ENCODE measurements at regions of chr12 and their contacts with region 1.

Region 1: GRCh38 chr12:49974231-49974675 is 1.5 kb downstream of the AQP6 start:
- DNase-seq: peak; percentile 57 to 88 (median 86)
- H3K4me3 ChIP-seq: peak overlapping the region in 36 of 59 donors; percentile 1 to 56 (median 24)
- H3K27ac ChIP-seq: peak overlapping the region in 50 of 59 donors; percentile 14 to 86 (median 70)
- H3K27me3 ChIP-seq: no peaks in the 10 kb centered on the region
- CTCF ChIP-seq: peak; percentile 22 to 89 (median 71)

Region 2: GRCh38 chr12:49422114-49422513 is 552.1 kb before region 1 on chr12:
- intact Hi-C with region 1: no loop called
- DNase-seq: no peak
- H3K4me3 ChIP-seq: no peak overlapping the region
- H3K27ac ChIP-seq: no peak overlapping the region
- H3K27me3 ChIP-seq: no peaks in the 10 kb centered on the region
- CTCF ChIP-seq: no peak

Region 3: DNA sequence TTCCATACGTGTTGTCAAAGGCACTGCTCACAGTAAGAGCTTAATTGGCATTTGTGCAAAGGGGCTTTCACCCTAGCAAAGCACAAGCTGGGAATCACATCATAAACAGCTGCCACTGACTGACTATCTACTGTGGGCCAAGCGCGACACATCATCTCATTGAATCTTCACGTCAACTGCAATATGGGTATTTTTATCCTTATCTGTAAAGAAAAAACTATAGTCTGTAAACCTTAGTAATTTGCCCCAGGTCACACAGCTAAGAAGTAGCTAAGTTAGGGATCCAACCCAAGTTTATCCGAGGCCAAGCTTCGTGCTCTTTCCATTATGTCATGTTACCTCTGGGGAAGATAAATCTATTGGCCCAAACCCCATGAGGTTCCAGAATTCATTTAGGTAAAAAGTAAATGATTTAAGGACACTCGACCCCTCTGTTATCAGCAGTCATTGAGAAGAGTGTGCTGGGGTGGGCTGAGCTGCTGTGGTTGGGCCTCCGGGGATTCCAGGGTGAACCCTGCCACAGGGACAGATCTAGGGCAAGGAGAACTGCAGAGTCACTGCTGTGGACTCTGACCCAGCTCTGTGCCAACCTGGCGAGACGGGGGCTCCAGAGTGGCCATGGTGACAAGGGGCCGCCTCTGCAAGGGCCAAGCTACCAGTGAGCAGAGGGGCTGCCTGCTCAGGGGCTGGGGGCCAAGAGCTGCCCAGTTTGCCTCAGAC is 173.7 kb before region 1 on chr12:
- intact Hi-C with region 1: no loop called
- DNase-seq: no peak
- H3K4me3 ChIP-seq: no peak overlapping the region
- H3K27ac ChIP-seq: no peak overlapping the region
- H3K27me3 ChIP-seq: no peaks in the 10 kb centered on the region
- CTCF ChIP-seq: no peak

Region 4: GRCh38 chr12:50024805-50025186 is 50.5 kb after region 1 on chr12:
- intact Hi-C with region 1: loop called (anchors 5 kb)
- DNase-seq: no peak
- H3K4me3 ChIP-seq: peak overlapping the region; percentile 55 to 95 (median 80)
- H3K27ac ChIP-seq: peak overlapping the region in 12 of 59 donors; percentile 24 to 92 (median 84)
- H3K27me3 ChIP-seq: no peaks in the 10 kb centered on the region
- CTCF ChIP-seq: no peak

Region 5: DNA sequence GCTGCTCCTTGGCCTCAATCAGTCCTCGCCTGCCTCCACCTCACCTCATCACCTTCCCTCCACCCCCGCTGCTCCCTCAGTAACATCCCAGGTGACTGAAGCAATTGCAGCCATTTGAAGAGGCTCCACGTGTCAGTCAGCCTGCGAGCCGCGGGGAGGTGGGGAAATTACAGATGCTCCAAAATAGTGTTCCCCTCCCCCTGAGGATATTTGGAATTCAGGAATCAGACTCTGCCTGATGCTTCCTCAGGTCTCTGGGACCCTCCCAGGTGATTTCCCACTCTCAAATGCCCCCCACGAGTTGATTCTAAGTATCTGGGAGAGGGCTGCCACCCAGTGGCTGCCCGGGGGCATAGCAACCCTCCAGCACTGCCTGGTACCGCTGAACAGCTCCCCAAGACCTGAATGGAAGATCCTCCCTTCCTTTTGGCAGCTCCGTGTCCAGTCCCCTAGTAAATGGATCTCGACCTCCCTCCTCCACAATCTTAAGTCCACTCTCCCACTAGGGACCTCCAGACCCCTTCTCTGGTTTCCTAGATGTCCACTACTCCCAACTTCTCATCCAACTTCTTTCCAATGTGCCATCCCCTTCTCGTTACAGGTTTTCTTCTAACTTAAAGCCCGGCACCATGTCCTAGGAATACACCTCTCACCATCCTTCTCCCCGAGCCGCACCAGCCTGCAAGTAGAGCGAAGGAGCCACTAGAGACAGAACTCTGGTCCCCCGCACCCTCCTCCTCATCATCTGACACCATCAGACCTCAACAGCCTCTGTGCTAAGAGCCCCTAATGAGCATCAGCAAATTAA is 81.8 kb after region 1 on chr12:
- intact Hi-C with region 1: loop called in 1 of 2 experiments (anchors 2 kb)
- DNase-seq: peak; percentile 36 to 71 (median 64)
- H3K4me3 ChIP-seq: peak overlapping the region in 48 of 59 donors; percentile 0 to 81 (median 71)
- H3K27ac ChIP-seq: peak overlapping the region in 56 of 59 donors; percentile 8 to 90 (median 76)
- H3K27me3 ChIP-seq: no peaks in the 10 kb centered on the region
- CTCF ChIP-seq: peak; percentile 75 to 99 (median 95)

Measured in dorsolateral prefrontal cortex (tissue), 120 donors.